SK-N-SH (cell line): ENCODE measurements at regions of chr12 and their contacts with region 1.

Region 1: DNA sequence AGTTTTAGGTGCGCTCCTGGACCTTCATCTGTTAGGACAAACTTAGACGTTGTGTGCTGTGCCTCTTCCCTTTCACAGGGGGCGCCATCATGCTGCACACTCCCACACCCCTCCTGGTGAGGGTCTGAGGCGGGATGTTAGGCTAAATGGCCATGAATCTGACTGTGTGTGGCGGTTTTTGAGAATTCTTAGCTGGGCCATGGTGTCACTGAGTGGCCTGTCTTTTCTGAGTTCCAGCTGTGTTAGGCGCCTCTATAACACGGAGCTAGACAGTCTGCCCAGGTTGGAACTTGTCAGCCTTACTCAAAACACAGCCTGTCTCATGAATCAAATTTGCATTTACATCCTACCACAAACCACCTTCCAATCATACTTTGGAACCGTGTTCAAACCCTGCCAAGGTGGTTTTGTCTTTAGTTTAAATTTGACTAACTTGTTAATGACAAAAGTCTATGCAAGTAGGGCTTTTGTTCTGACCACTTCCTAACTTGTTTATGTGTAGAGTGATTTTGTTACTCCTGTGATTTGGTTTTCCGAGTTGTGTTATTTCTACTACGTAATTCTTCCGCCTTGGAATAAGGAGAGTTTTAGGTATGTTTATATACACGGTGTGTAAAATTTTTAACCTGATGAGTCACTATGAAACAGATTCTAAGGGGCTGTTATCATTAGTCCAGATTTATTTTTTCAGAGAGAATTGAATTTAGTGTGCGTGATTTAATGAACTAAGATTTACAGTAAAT is 19.6 kb downstream of the ACVR1B start:
- DNase-seq: peak; percentile 57
- H3K4me3 ChIP-seq: no peak overlapping the region
- H3K27ac ChIP-seq: no peak overlapping the region
- H3K4me1 ChIP-seq: peaks cover 31% of the 10 kb centered on the region in 2 experiments; a peak in 3 of 4 replicates
- H3K27me3 ChIP-seq: no peaks in the 10 kb centered on the region
- CTCF ChIP-seq: peak; percentile 67
- EP300 ChIP-seq: no peak
- RAD21 ChIP-seq: peak; percentile 16; the same call in 1 of the 2 replicates

Region 2: GRCh38 chr12:51891843-51892242 is 79.2 kb before region 1 on chr12:
- CTCF ChIA-PET with region 1: interaction called, 63 read pairs
- POLR2A ChIA-PET with region 1: no interaction called
- DNase-seq: no peak
- H3K4me3 ChIP-seq: no peak overlapping the region
- H3K27ac ChIP-seq: no peak overlapping the region
- H3K4me1 ChIP-seq: peaks cover 0 to 9% of the 10 kb centered on the region in 2 experiments; a peak in 1 of 4 replicates
- H3K27me3 ChIP-seq: no peaks in the 10 kb centered on the region
- CTCF ChIP-seq: peak; percentile 61
- EP300 ChIP-seq: no peak
- RAD21 ChIP-seq: peak; percentile 68

Region 3: GRCh38 chr12:51897181-51897580 is 73.9 kb before region 1 on chr12:
- CTCF ChIA-PET with region 1: interaction called, 63 read pairs
- POLR2A ChIA-PET with region 1: no interaction called
- DNase-seq: peak; percentile 12
- H3K4me3 ChIP-seq: no peak overlapping the region
- H3K27ac ChIP-seq: no peak overlapping the region
- H3K4me1 ChIP-seq: peaks cover 0 to 9% of the 10 kb centered on the region in 2 experiments; a peak in 1 of 4 replicates
- H3K27me3 ChIP-seq: no peaks in the 10 kb centered on the region
- CTCF ChIP-seq: no peak
- EP300 ChIP-seq: no peak
- RAD21 ChIP-seq: no peak

Region 4: DNA sequence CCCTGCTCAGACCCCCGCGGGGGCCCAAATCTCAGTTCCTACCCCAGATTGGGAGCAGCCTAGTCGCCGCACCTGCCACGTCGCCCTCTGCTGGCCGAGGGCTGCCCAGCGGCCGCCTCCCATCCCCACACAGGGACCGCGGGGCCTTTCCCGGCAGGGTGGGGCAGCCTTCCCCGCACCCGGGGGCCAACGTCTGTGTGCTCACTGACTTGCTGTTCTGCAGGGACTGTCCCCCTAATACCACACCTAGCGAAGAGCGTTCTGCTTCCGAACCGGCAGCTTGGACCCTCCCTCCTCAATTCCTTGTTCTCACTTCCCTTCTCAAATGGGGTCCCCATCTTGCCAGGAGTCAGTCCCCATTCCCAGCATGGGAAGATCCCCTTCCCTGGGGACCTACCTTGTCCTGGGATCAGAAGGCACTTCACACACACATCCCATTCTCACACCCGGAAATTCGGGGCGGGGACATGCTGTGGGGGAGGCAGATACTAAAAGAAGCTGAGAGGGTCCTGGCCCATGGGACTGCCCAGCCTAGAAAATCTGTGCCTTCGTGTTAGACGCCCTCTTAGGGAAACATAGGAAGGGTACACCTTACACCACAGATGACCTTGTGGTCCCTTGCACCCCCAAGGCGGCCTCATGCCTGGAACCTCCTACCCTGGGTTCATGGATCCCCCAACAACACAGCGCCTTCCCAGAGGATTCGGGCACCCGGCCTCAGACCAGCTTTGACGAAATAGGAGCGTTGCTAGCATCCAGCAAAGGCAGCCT is 47.4 kb before region 1 on chr12:
- CTCF ChIA-PET with region 1: interaction called, 11 read pairs
- POLR2A ChIA-PET with region 1: no interaction called
- DNase-seq: peak; percentile 58
- H3K4me3 ChIP-seq: no peak overlapping the region; a peak in 1 of 4 replicates
- H3K27ac ChIP-seq: no peak overlapping the region
- H3K4me1 ChIP-seq: peaks cover 0 to 39% of the 10 kb centered on the region in 2 experiments; a peak in 1 of 4 replicates
- H3K27me3 ChIP-seq: no peaks in the 10 kb centered on the region
- CTCF ChIP-seq: peak; percentile 52
- EP300 ChIP-seq: no peak
- RAD21 ChIP-seq: no peak

Region 5: DNA sequence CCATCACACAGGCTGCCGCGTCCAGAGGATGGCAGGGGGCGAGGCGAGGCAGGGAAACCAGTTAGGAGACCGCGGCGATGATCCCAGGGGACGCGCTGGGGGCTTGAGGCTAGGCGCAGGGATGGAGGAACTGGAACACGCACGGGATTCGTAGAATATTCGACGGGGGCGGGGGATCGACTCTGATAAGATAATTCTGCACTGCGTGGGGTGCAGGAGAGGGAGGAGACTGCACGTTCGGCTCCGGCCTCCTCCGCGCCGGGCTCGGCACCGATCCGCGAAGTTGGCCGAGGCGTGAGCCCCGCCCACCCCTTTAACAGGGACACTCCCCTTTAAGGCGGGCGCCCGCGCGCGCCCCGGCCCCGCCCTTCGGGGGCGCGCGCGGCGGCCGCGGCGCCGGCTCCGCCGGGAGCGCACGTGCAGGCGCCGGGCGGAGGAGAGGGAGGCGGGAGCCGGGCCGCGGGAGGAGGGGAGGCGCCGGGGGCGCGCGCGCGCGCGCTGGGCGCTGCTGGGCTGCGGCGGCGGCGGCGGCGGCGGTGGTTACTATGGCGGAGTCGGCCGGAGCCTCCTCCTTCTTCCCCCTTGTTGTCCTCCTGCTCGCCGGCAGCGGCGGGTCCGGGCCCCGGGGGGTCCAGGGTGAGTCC is 19.8 kb before region 1 on chr12 and contains the start of gene ACVR1B:
- CTCF ChIA-PET with region 1: interaction called, 17 read pairs
- POLR2A ChIA-PET with region 1: no interaction called
- DNase-seq: peak; percentile 95
- H3K4me3 ChIP-seq: peak within 1 kb of the TSS; percentile 84 to 94
- H3K27ac ChIP-seq: peak within 1 kb of the TSS in 1 of 2 experiments; percentile 89; a peak in 2 of 4 replicates
- H3K4me1 ChIP-seq: peaks cover 6 to 20% of the 10 kb centered on the region in 2 experiments; a peak in 2 of 4 replicates
- H3K27me3 ChIP-seq: 0 out of 2 replicates have a peak, but pooled peaks cover 9% of the 10 kb centered on the region
- CTCF ChIP-seq: no peak
- EP300 ChIP-seq: no peak; a peak in 1 of 4 replicates
- RAD21 ChIP-seq: peak; percentile 10; the same call in 1 of the 2 replicates
- polyA plus RNA-seq, gene ACVR1B: 12.1 and 13.5 TPM in 2 replicates

Region 6: DNA sequence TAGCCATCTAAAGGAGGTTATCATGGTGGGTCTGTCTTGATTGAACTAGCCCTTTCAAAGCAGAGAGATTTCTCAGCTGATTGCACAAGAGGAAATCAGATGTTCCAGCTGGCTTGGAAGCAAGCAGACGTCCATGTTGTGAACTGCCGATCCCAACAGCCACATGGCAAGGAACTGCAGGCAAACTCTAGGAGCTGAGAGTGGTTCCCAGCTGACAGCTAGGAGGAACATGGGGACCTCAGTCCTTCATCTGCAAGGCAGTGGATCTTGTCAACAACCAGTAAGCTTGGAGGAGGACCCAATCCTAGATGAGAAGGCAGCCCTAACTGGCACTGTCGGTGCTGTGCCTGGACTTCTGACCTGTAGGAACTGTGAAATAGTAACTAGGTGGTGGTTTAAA is 11.9 kb before region 1 on chr12:
- CTCF ChIA-PET with region 1: interaction called, 25 read pairs
- POLR2A ChIA-PET with region 1: no interaction called
- DNase-seq: no peak
- H3K4me3 ChIP-seq: no peak overlapping the region
- H3K27ac ChIP-seq: peak overlapping the region in 1 of 2 experiments; percentile 11; a peak in 1 of 4 replicates
- H3K4me1 ChIP-seq: peaks cover 0 to 15% of the 10 kb centered on the region in 2 experiments; a peak in 2 of 4 replicates
- H3K27me3 ChIP-seq: no peaks in the 10 kb centered on the region
- CTCF ChIP-seq: no peak
- EP300 ChIP-seq: no peak
- RAD21 ChIP-seq: no peak

Region 7: GRCh38 chr12:52121824-52122539 is 150.9 kb after region 1 on chr12:
- CTCF ChIA-PET with region 1: no interaction called
- POLR2A ChIA-PET with region 1: no interaction called
- DNase-seq: peak; percentile 87
- H3K4me3 ChIP-seq: no peak overlapping the region
- H3K27ac ChIP-seq: no peak overlapping the region
- H3K4me1 ChIP-seq: peaks cover 0 to 26% of the 10 kb centered on the region in 2 experiments; a peak in 1 of 4 replicates
- H3K27me3 ChIP-seq: peaks cover 4% of the 10 kb centered on the region; the same call in 1 of the 2 replicates
- CTCF ChIP-seq: peak; percentile 77
- EP300 ChIP-seq: peak in 1 of 2 experiments; percentile 9; a peak in 1 of 4 replicates
- RAD21 ChIP-seq: peak; percentile 78